OCI-LY7 (cell line): ENCODE measurements at regions of chr6 and their contacts with region 1.

Region 1: GRCh38 chr6:82270881-82271645 is 23.5 kb upstream of the IBTK start:
- DNase-seq: peak; percentile 52
- H3K4me3 ChIP-seq: no peak overlapping the region
- H3K27ac ChIP-seq: no peak overlapping the region
- H3K4me1 ChIP-seq: no peaks in the 10 kb centered on the region
- CTCF ChIP-seq: peak; percentile 91

Region 2: DNA sequence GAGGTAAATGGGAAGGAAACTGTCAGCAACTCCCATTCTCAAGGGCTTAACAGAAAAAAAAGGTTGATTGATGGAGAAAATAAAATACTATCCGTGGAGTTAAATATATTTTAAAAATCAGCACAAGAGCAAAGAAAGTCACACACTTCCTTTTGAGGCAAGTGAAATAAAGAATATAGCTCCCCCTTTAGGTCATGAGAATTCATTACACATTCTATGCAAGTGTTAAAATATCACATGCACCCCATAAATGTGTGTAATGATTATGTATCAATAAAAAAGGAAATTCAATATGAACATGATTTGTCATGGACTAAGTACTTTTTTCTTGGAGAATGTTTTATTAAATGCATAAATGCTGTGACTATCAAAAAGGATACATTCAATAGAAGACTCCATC is 441.8 kb after region 1 on chr6:
- CTCF ChIA-PET with region 1: no interaction called
- POLR2A ChIA-PET with region 1: no interaction called
- intact Hi-C with region 1: loop called (anchors 10 kb)
- DNase-seq: peak; percentile 19
- H3K4me3 ChIP-seq: no peak overlapping the region
- H3K27ac ChIP-seq: no peak overlapping the region
- H3K4me1 ChIP-seq: no peaks in the 10 kb centered on the region
- CTCF ChIP-seq: peak; percentile 80

Region 3: GRCh38 chr6:83057705-83058321 is 786.8 kb after region 1 on chr6:
- CTCF ChIA-PET with region 1: interaction called, 7 read pairs
- POLR2A ChIA-PET with region 1: no interaction called
- intact Hi-C with region 1: loop called (anchors 1 kb)
- DNase-seq: peak; percentile 67
- H3K4me3 ChIP-seq: no peak overlapping the region
- H3K27ac ChIP-seq: no peak overlapping the region
- H3K4me1 ChIP-seq: peaks cover 7% of the 10 kb centered on the region
- CTCF ChIP-seq: peak; percentile 87

Region 4: GRCh38 chr6:83514866-83515466 is 1243.9 kb after region 1 on chr6:
- CTCF ChIA-PET with region 1: no interaction called
- POLR2A ChIA-PET with region 1: no interaction called
- intact Hi-C with region 1: loop called (anchors 10 kb)
- DNase-seq: peak; percentile 50
- H3K4me3 ChIP-seq: no peak overlapping the region
- H3K27ac ChIP-seq: no peak overlapping the region
- H3K4me1 ChIP-seq: no peaks in the 10 kb centered on the region
- CTCF ChIP-seq: peak; percentile 91